A673 (cell line): ENCODE measurements at regions of chr15 and their contacts with region 1.

Region 1: GRCh38 chr15:55649054-55649423 is 60.9 kb upstream of the PYGO1 start:
- DNase-seq: no peak
- H3K4me3 ChIP-seq: no peak overlapping the region
- H3K27ac ChIP-seq: no peak overlapping the region
- H3K4me1 ChIP-seq: no peaks in the 10 kb centered on the region
- H3K27me3 ChIP-seq: no peaks in the 10 kb centered on the region
- CTCF ChIP-seq: no peak

Region 2: GRCh38 chr15:55221090-55222011 is 427.7 kb before region 1 on chr15:
- CTCF ChIA-PET with region 1: no interaction called
- POLR2A ChIA-PET with region 1: no interaction called
- intact Hi-C with region 1: loop called (anchors 5 kb)
- DNase-seq: peak; percentile 11
- H3K4me3 ChIP-seq: no peak overlapping the region
- H3K27ac ChIP-seq: no peak overlapping the region
- H3K4me1 ChIP-seq: no peaks in the 10 kb centered on the region
- H3K27me3 ChIP-seq: no peaks in the 10 kb centered on the region
- CTCF ChIP-seq: no peak

Region 3: GRCh38 chr15:55799291-55800212 is 150.5 kb after region 1 on chr15:
- CTCF ChIA-PET with region 1: no interaction called
- POLR2A ChIA-PET with region 1: no interaction called
- intact Hi-C with region 1: loop called (anchors 1 kb)
- DNase-seq: peak; percentile 69
- H3K4me3 ChIP-seq: no peak overlapping the region
- H3K27ac ChIP-seq: no peak overlapping the region
- H3K4me1 ChIP-seq: no peaks in the 10 kb centered on the region
- H3K27me3 ChIP-seq: no peaks in the 10 kb centered on the region
- CTCF ChIP-seq: peak; percentile 82

Region 4: GRCh38 chr15:55846116-55846707 is 197.2 kb after region 1 on chr15:
- CTCF ChIA-PET with region 1: interaction called, 7 read pairs
- POLR2A ChIA-PET with region 1: no interaction called
- intact Hi-C with region 1: loop called (anchors 1 kb)
- DNase-seq: peak; percentile 84
- H3K4me3 ChIP-seq: no peak overlapping the region
- H3K27ac ChIP-seq: no peak overlapping the region
- H3K4me1 ChIP-seq: no peaks in the 10 kb centered on the region
- H3K27me3 ChIP-seq: no peaks in the 10 kb centered on the region
- CTCF ChIP-seq: peak; percentile 88

Region 5: DNA sequence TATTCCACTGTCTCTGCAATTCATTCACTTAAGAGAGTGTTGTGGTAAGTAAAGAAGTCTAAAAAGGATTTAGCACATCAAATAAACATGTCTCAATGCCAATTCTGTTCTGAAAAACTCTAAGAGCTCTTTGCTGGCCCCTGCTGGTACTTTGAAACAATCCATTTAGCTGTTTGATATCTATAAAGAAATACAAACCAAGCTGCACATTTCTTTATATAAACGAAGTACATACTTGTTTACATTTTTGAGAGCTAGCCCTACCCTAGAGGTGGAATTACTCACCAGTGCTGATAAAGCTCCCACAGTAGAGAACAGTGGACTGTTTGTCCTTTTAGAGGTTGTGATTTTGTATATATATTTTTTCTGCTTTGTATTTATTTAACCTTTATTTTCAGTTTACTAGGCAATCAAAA is 268.9 kb after region 1 on chr15:
- CTCF ChIA-PET with region 1: interaction called, 6 read pairs
- POLR2A ChIA-PET with region 1: no interaction called
- intact Hi-C with region 1: loop called (anchors 10 kb)
- DNase-seq: peak; percentile 73
- H3K4me3 ChIP-seq: no peak overlapping the region
- H3K27ac ChIP-seq: no peak overlapping the region
- H3K4me1 ChIP-seq: peaks cover 17% of the 10 kb centered on the region
- H3K27me3 ChIP-seq: no peaks in the 10 kb centered on the region
- CTCF ChIP-seq: peak; percentile 71

Region 6: GRCh38 chr15:56052395-56053045 is 403.5 kb after region 1 on chr15:
- CTCF ChIA-PET with region 1: no interaction called
- POLR2A ChIA-PET with region 1: no interaction called
- intact Hi-C with region 1: loop called (anchors 2 kb)
- DNase-seq: peak; percentile 65
- H3K4me3 ChIP-seq: no peak overlapping the region
- H3K27ac ChIP-seq: no peak overlapping the region
- H3K4me1 ChIP-seq: no peaks in the 10 kb centered on the region
- H3K27me3 ChIP-seq: no peaks in the 10 kb centered on the region
- CTCF ChIP-seq: peak; percentile 79